Ascending aorta (tissue), 2 donors: ENCODE measurements at regions of chr15 and their contacts with region 1.

Region 1: GRCh38 chr15:83571820-83572707 is 81.9 kb upstream of the ADAMTSL3 start:
- DNase-seq: no peak
- H3K4me3 ChIP-seq: no peak overlapping the region
- H3K27ac ChIP-seq: no peak overlapping the region
- H3K4me1 ChIP-seq: no peaks in the 10 kb centered on the region
- H3K27me3 ChIP-seq: no peaks in the 10 kb centered on the region
- CTCF ChIP-seq: peak in 2 of 3 experiments; percentile 61 to 74

Region 2: GRCh38 chr15:83830381-83830780 is 258.3 kb after region 1 on chr15:
- intact Hi-C with region 1: loop called (anchors 5 kb)
- DNase-seq: no peak
- H3K4me3 ChIP-seq: no peak overlapping the region
- H3K27ac ChIP-seq: no peak overlapping the region
- H3K4me1 ChIP-seq: no peaks in the 10 kb centered on the region
- H3K27me3 ChIP-seq: no peaks in the 10 kb centered on the region
- CTCF ChIP-seq: no peak